A549 (cell line): ENCODE measurements at regions of chr17 and their contacts with region 1.

Region 1: GRCh38 chr17:21119247-21119918 is 7.4 kb upstream of the DHRS7B start:
- DNase-seq: peak; percentile 82 to 86
- ATAC-seq: peak; percentile 86 to 92
- H3K4me3 ChIP-seq: peak overlapping the region; percentile 23; the same call in 1 of the 3 replicates
- H3K27ac ChIP-seq: no peak overlapping the region
- H3K4me1 ChIP-seq: no peaks in the 10 kb centered on the region
- CTCF ChIP-seq: peak; percentile 95
- EP300 ChIP-seq: no peak
- POLR2A ChIP-seq: no peak
- RAD21 ChIP-seq: peak; percentile 78 to 88

Region 2: DNA sequence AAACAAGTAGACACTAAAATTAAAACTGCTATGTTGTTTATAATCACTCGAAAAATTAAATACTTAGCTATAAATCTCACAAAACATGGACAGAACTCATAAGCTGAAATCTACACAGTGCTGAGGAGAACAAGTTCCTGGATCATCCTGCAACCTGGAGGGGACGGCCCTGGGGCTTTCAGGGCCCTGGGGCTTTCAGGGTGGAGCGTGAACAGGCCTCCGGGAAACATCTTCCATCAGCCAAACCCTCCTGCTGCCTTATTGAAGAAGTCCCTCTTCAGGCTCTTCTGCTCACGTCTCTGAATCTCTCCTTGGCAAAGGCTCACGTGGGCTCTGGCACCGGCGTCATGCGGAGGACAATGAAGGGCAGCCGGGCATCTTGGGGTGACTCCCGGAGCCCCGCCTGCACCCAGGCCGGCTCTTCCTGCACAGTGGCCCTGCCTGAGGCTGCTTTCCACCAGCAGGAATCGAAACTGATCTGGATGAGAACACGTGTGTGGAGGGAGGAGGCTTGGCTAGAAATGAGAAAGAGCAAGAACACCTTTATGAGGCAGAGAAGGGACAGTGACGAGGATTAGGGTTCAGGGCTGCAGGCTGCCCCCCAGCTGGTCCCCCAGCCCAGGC is 412.5 kb before region 1 on chr17:
- CTCF ChIA-PET with region 1: no interaction called
- POLR2A ChIA-PET with region 1: no interaction called
- DNase-seq: no peak
- ATAC-seq: peak; percentile 56 to 62; a peak in 5 of 6 replicates
- H3K4me3 ChIP-seq: no peak overlapping the region
- H3K27ac ChIP-seq: no peak overlapping the region
- H3K4me1 ChIP-seq: no peaks in the 10 kb centered on the region
- CTCF ChIP-seq: no peak
- EP300 ChIP-seq: no peak
- POLR2A ChIP-seq: no peak
- RAD21 ChIP-seq: no peak

Region 3: GRCh38 chr17:21043286-21044232 is 75.8 kb before region 1 on chr17:
- CTCF ChIA-PET with region 1: interaction called, 14 read pairs
- POLR2A ChIA-PET with region 1: interaction called, 9 read pairs
- DNase-seq: peak; percentile 91 to 99
- ATAC-seq: peak; percentile 91 to 96
- H3K4me3 ChIP-seq: peak overlapping the region; percentile 45
- H3K27ac ChIP-seq: peak overlapping the region; percentile 90
- H3K4me1 ChIP-seq: peaks cover 24% of the 10 kb centered on the region
- CTCF ChIP-seq: peak; percentile 86
- EP300 ChIP-seq: no peak
- POLR2A ChIP-seq: peak; percentile 91
- RAD21 ChIP-seq: peak in 1 of 2 experiments; percentile 64; a peak in 3 of 5 replicates

Region 4: DNA sequence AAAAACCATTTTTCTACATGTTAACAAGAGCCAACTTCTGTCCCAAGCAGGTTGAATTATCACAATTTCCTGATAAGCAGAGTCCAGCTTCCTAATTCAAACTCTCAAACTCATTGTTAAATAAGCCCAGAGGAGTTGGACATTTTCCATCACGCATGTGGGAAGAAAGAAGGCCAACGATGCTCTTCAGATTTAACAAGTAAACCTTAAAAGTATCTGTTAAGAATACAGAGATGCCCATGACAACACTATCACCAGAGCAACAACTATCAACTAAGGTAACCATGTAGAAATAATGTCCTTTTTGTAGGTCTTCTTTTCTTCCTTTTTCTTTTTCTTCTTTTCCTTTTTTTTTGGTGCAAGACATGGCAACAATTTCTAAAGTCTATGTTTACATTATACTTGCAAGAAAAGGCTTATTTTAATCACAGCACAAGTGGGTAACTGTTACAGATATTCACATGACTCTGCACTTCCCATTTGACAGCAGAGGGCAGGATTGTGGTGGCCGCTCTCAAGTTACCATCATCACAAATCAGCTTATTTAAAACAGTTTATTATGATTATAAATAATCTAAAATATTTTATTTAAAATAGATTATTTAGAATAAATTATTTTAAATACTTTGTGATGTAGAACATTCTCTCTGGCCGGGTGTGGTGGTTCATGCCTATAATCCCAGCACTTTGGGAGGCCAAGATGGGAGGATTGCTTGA is 28.3 kb before region 1 on chr17:
- CTCF ChIA-PET with region 1: interaction called, 14 read pairs
- POLR2A ChIA-PET with region 1: no interaction called
- DNase-seq: no peak
- ATAC-seq: no peak
- H3K4me3 ChIP-seq: no peak overlapping the region
- H3K27ac ChIP-seq: no peak overlapping the region
- H3K4me1 ChIP-seq: no peaks in the 10 kb centered on the region
- CTCF ChIP-seq: no peak
- EP300 ChIP-seq: no peak
- POLR2A ChIP-seq: no peak
- RAD21 ChIP-seq: no peak

Region 5: GRCh38 chr17:21105064-21105894 is 14.1 kb before region 1 on chr17:
- CTCF ChIA-PET with region 1: interaction called, 58 read pairs
- POLR2A ChIA-PET with region 1: interaction called, 7 read pairs
- DNase-seq: no peak
- ATAC-seq: no peak
- H3K4me3 ChIP-seq: no peak overlapping the region
- H3K27ac ChIP-seq: no peak overlapping the region
- H3K4me1 ChIP-seq: no peaks in the 10 kb centered on the region
- CTCF ChIP-seq: no peak
- EP300 ChIP-seq: no peak
- POLR2A ChIP-seq: no peak
- RAD21 ChIP-seq: no peak

Region 6: GRCh38 chr17:21140911-21141310 is 21.5 kb after region 1 on chr17:
- CTCF ChIA-PET with region 1: interaction called, 10 read pairs
- POLR2A ChIA-PET with region 1: no interaction called
- DNase-seq: no peak
- ATAC-seq: no peak
- H3K4me3 ChIP-seq: no peak overlapping the region
- H3K27ac ChIP-seq: no peak overlapping the region
- H3K4me1 ChIP-seq: 0 out of 3 replicates have a peak, but pooled peaks cover 7% of the 10 kb centered on the region
- CTCF ChIP-seq: no peak
- EP300 ChIP-seq: no peak
- POLR2A ChIP-seq: no peak
- RAD21 ChIP-seq: no peak

Region 7: DNA sequence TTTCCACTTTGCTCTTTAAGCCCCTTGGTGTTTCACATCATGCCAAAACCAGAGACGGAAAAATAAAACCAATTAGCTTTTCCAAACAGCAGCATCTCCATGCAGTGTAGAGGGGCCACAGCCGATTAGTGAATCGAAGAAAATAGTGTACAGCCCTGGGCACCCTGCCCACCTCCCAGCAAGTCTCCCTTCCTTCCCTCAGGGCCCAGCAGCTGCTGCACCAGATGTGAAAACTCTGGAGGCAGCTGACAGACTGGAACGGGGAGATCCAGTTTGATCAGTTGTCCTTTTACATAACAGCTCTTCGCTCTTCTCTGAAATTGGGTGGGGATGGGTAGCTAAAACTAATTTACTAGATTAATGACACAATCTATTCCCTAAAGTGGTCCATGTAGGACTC is 75.3 kb after region 1 on chr17:
- CTCF ChIA-PET with region 1: interaction called, 12 read pairs
- POLR2A ChIA-PET with region 1: interaction called, 3 read pairs
- DNase-seq: no peak
- ATAC-seq: no peak
- H3K4me3 ChIP-seq: no peak overlapping the region
- H3K27ac ChIP-seq: no peak overlapping the region
- H3K4me1 ChIP-seq: no peaks in the 10 kb centered on the region
- CTCF ChIP-seq: no peak
- EP300 ChIP-seq: no peak
- POLR2A ChIP-seq: no peak
- RAD21 ChIP-seq: no peak

Region 8: GRCh38 chr17:21511363-21512198 is 392.2 kb after region 1 on chr17:
- CTCF ChIA-PET with region 1: interaction called, 44 read pairs
- POLR2A ChIA-PET with region 1: no interaction called
- DNase-seq: peak; percentile 84 to 87
- ATAC-seq: peak; percentile 93 to 98
- H3K4me3 ChIP-seq: peak overlapping the region; percentile 43
- H3K27ac ChIP-seq: peak overlapping the region; percentile 24 to 79; a peak in 5 of 6 replicates
- H3K4me1 ChIP-seq: no peaks in the 10 kb centered on the region; the same call in 2 of the 3 replicates
- CTCF ChIP-seq: peak; percentile 86
- EP300 ChIP-seq: no peak
- POLR2A ChIP-seq: no peak
- RAD21 ChIP-seq: peak; percentile 69 to 86